Vagina (tissue), 2 donors: ENCODE measurements at regions of chr17 and their contacts with region 1.

Region 1: GRCh38 chr17:17496189-17497064 is at the start of gene RASD1:
- DNase-seq: no peak
- H3K4me3 ChIP-seq: peak within 1 kb of the TSS; percentile 64 to 72
- H3K27ac ChIP-seq: peak within 1 kb of the TSS; percentile 93
- H3K4me1 ChIP-seq: peaks cover 34% of the 10 kb centered on the region
- H3K27me3 ChIP-seq: no peaks in the 10 kb centered on the region
- CTCF ChIP-seq: peak; percentile 79 to 94 (median 86)
- POLR2A ChIP-seq: peak; percentile 29 to 97
- total RNA-seq, gene RASD1: 227 TPM

Region 2: GRCh38 chr17:17356149-17356930 is 140.1 kb before region 1 on chr17:
- intact Hi-C with region 1: loop called (anchors 5 kb)
- DNase-seq: no peak
- H3K4me3 ChIP-seq: no peak overlapping the region
- H3K27ac ChIP-seq: no peak overlapping the region
- H3K4me1 ChIP-seq: peaks cover 12% of the 10 kb centered on the region
- H3K27me3 ChIP-seq: no peaks in the 10 kb centered on the region
- CTCF ChIP-seq: peak; percentile 91 to 100 (median 96)
- POLR2A ChIP-seq: no peak

Region 3: DNA sequence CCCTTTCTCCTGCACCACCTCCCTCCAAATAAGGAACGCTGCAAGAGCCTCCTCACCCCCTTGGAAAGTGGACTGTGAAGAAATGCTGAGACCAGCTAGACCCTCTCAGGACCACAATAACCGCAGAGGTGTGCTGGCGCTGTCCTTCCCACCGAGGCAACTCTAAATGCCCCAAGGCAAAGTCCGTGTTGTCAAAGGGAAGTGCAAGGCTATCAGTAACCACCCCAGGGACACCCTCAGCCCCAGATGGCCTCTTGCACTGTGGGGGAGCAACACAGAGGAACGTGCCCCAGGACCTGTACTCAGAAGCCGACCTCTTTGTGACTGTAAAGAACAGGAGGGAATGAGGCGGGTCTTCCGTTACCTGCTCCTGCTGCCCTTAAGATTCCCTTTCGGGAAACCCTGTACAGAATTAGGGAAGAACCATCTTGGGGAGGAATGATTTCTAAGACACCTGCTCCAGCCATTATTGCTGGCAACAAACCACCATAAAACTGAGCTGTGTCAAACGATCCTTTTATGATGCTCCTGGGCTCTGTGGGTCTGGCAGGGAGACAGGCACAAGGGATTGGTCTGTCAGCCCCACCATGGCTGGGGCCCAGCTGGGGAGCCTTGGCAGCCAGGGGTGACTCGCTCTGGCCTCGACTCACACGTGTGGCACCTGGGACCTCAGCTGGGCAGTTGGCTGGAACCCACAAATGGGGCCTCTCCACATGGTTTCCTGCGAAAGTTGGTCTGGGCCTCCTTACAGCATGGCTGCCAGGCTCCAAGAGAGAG is 34.2 kb before region 1 on chr17:
- intact Hi-C with region 1: no loop called
- DNase-seq: no peak
- H3K4me3 ChIP-seq: no peak overlapping the region
- H3K27ac ChIP-seq: no peak overlapping the region
- H3K4me1 ChIP-seq: no peaks in the 10 kb centered on the region
- H3K27me3 ChIP-seq: no peaks in the 10 kb centered on the region
- CTCF ChIP-seq: no peak
- POLR2A ChIP-seq: no peak

Region 4: DNA sequence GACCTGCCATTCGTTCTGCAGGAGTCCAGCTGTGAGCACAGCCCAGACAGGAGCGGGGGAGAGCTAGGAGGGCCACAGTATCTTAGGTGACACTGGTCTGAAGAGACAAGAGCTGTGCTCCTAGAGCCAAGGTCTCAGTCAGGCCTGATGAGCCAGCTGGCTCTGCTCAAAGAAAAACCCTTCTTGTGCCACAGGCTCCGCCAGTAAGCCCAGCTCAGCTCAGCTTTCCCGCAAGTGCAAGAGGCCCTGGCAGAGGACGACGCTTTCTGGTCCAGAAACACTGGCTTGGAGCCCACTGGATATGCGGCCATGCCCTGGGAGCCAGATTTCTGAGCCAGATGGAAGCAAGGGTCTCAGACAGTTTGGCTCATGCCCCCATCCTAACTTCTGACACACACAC is 71.2 kb after region 1 on chr17:
- intact Hi-C with region 1: loop called (anchors 2 kb)
- DNase-seq: no peak
- H3K4me3 ChIP-seq: no peak overlapping the region
- H3K27ac ChIP-seq: peak overlapping the region; percentile 29
- H3K4me1 ChIP-seq: peaks cover 41% of the 10 kb centered on the region
- H3K27me3 ChIP-seq: no peaks in the 10 kb centered on the region
- CTCF ChIP-seq: no peak
- POLR2A ChIP-seq: no peak

Region 5: GRCh38 chr17:17613708-17614114 is 117.3 kb after region 1 on chr17:
- intact Hi-C with region 1: loop called (anchors 10 kb)
- DNase-seq: no peak
- H3K4me3 ChIP-seq: no peak overlapping the region
- H3K27ac ChIP-seq: no peak overlapping the region
- H3K4me1 ChIP-seq: no peaks in the 10 kb centered on the region
- H3K27me3 ChIP-seq: no peaks in the 10 kb centered on the region
- CTCF ChIP-seq: peak; percentile 20 to 78 (median 43)
- POLR2A ChIP-seq: no peak

Region 6: GRCh38 chr17:17641621-17642409 is 145.4 kb after region 1 on chr17:
- intact Hi-C with region 1: loop called (anchors 10 kb)
- DNase-seq: no peak
- H3K4me3 ChIP-seq: no peak overlapping the region
- H3K27ac ChIP-seq: no peak overlapping the region
- H3K4me1 ChIP-seq: no peaks in the 10 kb centered on the region
- H3K27me3 ChIP-seq: no peaks in the 10 kb centered on the region
- CTCF ChIP-seq: peak; percentile 79 to 98 (median 97)
- POLR2A ChIP-seq: no peak